Adrenal gland (tissue), 19 donors: ENCODE measurements at regions of chr7 and their contacts with region 1.

Region 1: GRCh38 chr7:92447345-92448204 is at the start of gene GATAD1:
- DNase-seq: peak; percentile 93 to 95 (median 94)
- H3K4me3 ChIP-seq: peak within 1 kb of the TSS; percentile 81 to 100 (median 94)
- H3K27ac ChIP-seq: peak within 1 kb of the TSS; percentile 81 to 98 (median 97)
- H3K4me1 ChIP-seq: peaks cover 0 to 11% of the 10 kb centered on the region in 2 donors
- H3K27me3 ChIP-seq: no peaks in the 10 kb centered on the region
- CTCF ChIP-seq: peak; percentile 2 to 97 (median 92)
- POLR2A ChIP-seq: peak; percentile 66 to 87
- total RNA-seq, gene GATAD1: 25.0 to 88.0 (median 35.3) TPM

Region 2: DNA sequence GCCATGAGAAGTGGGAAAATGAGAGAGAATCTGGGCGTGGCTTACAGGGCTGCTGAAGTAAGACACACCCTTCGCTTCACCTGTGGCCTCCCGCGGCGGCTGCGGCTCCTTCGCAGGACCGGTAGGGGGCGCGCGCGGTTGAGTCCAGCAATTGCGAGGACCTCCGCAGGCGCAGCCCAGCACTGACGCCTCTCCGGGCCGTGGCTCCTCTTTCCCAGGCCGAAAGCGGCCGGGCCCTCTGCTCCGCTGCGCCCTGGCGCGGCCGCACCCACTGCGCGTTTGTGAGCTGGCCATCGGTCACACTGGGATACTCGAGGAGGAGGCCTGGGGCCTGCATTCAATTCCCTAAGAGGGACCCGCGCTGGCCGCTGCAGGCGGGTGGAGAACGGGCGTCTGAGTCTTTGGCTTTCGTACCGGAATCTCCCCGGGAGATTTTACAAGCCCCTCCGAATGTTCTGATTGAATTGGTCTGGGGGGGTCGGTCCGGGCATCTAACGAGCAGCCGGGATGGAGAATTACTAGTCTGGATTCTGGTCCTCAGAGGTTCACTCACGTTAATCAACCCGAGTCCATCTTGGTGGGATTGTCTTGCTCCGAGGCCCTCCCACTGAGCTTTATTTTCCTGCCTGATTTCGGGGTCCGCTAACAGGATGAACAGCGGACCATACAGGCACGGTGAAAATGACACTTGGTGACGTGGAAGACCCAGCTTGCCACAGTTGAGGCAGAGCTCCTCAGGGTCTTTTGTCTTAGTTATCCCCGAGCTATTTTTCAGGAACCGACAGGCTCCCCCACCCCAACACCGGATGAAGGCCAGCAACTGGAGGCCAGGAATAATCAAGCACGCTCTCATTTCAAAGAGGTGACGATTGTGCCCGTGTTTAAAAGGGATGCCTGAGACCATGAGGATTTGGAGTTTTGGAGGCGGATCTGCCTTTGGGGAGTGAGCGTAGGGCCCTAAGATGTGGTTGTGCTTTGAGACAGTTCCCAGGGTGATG is 268.3 kb before region 1 on chr7 and contains the start of gene LRRD1:
- intact Hi-C with region 1: loop called in 1 of 2 experiments (anchors 5 kb)
- DNase-seq: peak; percentile 83 to 94 (median 88)
- H3K4me3 ChIP-seq: peak within 1 kb of the TSS in 2 of 4 donors; percentile 48 to 70
- H3K27ac ChIP-seq: peak within 1 kb of the TSS in 4 of 5 donors; percentile 67 to 87 (median 84)
- H3K4me1 ChIP-seq: peaks cover 0 to 8% of the 10 kb centered on the region in 2 donors
- H3K27me3 ChIP-seq: no peaks in the 10 kb centered on the region
- CTCF ChIP-seq: peak; percentile 86 to 99 (median 92)
- POLR2A ChIP-seq: peak; percentile 45 to 48
- total RNA-seq, gene LRRD1: 0.16 to 0.50 (median 0.18) TPM in 5 of 9 donors, not detected in the others

Region 3: GRCh38 chr7:92528188-92528957 is 80.8 kb after region 1 on chr7 and contains the starts of genes PEX1 and RBM48:
- intact Hi-C with region 1: no loop called
- DNase-seq: peak; percentile 96 to 99 (median 97)
- H3K4me3 ChIP-seq: peak within 1 kb of the TSS; percentile 35 to 99 (median 72)
- H3K27ac ChIP-seq: peak within 1 kb of the TSS; percentile 61 to 93 (median 81)
- H3K4me1 ChIP-seq: peaks cover 12 to 23% of the 10 kb centered on the region in 2 donors
- H3K27me3 ChIP-seq: no peaks in the 10 kb centered on the region
- CTCF ChIP-seq: peak in 2 of 6 experiments; percentile 22 to 39
- POLR2A ChIP-seq: peak; percentile 38 to 82
- total RNA-seq, gene PEX1: 8.8 to 33.2 (median 16.5) TPM
- total RNA-seq, gene RBM48: 4.4 to 29.0 (median 11.4) TPM

Region 4: GRCh38 chr7:92790992-92791391 is 343.4 kb after region 1 on chr7:
- intact Hi-C with region 1: no loop called
- DNase-seq: peak in 3 of 7 donors; percentile 40 to 50 (median 48)
- H3K4me3 ChIP-seq: no peak overlapping the region
- H3K27ac ChIP-seq: no peak overlapping the region
- H3K4me1 ChIP-seq: peaks cover 14 to 43% of the 10 kb centered on the region in 2 donors
- H3K27me3 ChIP-seq: no peaks in the 10 kb centered on the region
- CTCF ChIP-seq: no peak
- POLR2A ChIP-seq: no peak